ENCODE measurements at regions of chr9 and their contacts with region 1.

Region 1: DNA sequence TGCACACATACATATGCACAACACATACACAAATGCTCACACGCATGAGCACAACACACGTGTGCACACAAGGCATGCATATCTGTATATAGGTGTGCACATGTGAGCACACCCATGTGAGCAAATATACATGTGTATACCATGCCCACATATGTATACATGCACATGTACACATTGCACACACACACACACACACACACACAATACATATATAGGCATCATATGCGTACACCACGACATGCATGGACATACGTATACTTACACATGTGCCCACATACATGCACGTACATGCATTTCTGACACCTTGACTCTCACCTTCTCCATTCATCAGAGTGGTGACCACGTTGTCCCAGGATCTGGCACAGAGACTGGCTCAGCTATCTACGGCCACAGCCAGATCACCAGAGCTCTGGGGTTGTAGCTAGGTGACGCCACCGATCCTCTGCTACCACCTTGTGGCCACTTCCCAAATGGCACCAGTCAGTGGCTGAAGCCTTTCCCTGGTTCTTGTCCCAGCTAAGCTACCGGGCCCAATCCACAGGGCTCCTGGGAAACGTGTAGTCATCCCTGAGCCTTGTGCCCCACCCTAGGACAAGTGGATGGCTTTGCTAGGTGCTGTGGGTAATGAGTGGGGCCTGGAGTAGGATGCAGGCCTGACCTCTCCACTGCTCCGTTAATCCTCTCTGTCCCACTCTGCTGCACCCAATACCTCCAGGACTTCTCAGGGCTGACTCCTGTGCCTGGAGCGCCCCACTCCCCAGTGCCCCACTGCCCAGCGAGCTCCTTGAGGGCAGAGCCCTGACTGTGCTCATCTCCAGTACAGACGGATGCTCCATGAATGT is 194.4 kb downstream of the RGS3 start:
- DNase-seq: peak; percentile 87 to 90 (median 88)
- ATAC-seq: peak; percentile 54 to 83 (median 74)
- H3K4me3 ChIP-seq: no peak overlapping the region
- H3K27ac ChIP-seq: peak overlapping the region in 5 of 12 donors; percentile 9 to 56 (median 28)
- H3K4me1 ChIP-seq: peaks cover 8 to 44% (median 30%) of the 10 kb centered on the region in 12 donors
- H3K27me3 ChIP-seq: no peaks in the 10 kb centered on the region
- CTCF ChIP-seq: peak; percentile 93 to 98 (median 97)
- POLR2A ChIP-seq: no peak

Region 2: DNA sequence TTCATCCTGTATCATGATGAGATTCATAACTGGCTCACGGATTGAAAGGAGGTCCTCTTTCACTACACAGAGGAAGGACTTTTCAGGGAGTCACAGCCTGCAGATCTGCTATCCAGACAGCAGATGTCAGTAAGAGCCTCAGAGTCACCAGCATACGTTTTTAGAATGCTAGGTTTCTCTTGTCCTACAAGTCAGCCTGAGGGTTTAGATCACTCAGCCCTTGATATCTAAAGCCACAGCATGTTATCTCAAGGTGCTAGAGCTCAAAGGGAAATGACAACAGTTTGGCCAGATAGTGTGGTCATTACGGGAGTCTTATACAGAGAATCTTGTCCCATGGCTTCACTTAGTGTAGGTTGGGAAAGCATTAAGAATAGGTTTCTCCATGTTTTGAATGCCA is 736.4 kb before region 1 on chr9:
- intact Hi-C with region 1: loop called in 1 of 10 experiments (anchors 10 kb)
- DNase-seq: no peak
- ATAC-seq: peak in 3 of 4 donors; percentile 61 to 76 (median 62)
- H3K4me3 ChIP-seq: no peak overlapping the region
- H3K27ac ChIP-seq: no peak overlapping the region
- H3K4me1 ChIP-seq: no peaks in the 10 kb centered on the region
- H3K27me3 ChIP-seq: peaks cover 0 to 6% (median 0%) of the 10 kb centered on the region in 9 donors
- CTCF ChIP-seq: peak in 10 of 12 donors; percentile 16 to 65 (median 46)
- POLR2A ChIP-seq: no peak

Region 3: DNA sequence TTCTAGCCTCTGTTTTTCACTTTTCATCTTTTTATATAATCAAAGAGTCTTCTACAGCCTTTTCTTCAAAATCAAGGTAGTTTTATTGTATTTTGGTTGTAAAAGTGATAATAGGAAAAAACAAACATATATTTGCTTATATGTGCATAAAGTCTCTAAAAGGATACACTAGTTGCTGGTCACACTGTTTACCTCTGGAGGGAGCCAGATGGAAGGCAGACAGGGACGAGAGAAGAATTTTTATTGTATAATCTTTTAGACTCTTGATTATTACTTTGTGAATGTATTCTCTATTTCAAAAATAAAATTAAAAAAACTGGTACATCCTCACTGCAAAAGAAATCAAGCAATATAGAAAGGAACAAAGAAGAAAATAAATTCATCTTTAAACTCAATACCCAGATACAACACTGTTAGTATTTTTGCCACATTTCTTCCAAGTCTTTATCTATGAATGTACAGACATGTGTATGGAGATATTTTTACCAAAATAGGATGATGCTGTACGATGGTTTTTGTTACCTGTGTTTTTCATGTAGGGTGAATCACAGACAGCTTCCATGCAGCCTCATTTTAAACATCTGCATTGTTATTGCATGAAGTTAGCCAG is 348.6 kb before region 1 on chr9:
- intact Hi-C with region 1: loop called in 5 of 10 experiments (anchors 2 to 10 kb)
- DNase-seq: no peak
- ATAC-seq: peak in 2 of 4 donors; percentile 63 to 64
- H3K4me3 ChIP-seq: no peak overlapping the region
- H3K27ac ChIP-seq: peak overlapping the region in 3 of 12 donors; percentile 16 to 73 (median 71)
- H3K4me1 ChIP-seq: peaks cover 0 to 22% (median 9%) of the 10 kb centered on the region in 12 donors
- H3K27me3 ChIP-seq: no peaks in the 10 kb centered on the region
- CTCF ChIP-seq: peak; percentile 56 to 83 (median 65)
- POLR2A ChIP-seq: no peak

Region 4: DNA sequence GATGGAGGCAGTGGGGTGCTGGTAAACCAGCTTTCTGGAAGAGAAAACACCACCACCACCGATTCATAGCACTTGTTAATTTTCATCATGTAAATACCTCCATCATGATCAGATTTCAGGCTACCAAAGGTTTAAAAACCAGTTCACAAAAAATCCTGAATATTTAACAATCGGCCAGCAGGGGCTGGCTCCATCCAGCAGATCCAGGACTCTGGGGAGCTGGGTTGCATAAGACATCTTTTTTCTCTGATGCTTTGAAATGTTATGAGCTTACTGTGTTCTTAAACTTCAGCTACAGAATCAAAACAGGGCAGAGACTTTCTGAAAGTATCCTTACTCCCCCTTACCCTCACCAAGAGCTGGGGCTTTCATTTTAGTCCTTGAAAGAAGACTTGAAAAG is 340.1 kb before region 1 on chr9:
- intact Hi-C with region 1: loop called in 3 of 10 experiments (anchors 5 to 10 kb)
- DNase-seq: no peak
- ATAC-seq: no peak
- H3K4me3 ChIP-seq: no peak overlapping the region
- H3K27ac ChIP-seq: no peak overlapping the region
- H3K4me1 ChIP-seq: peaks cover 0 to 3% (median 0%) of the 10 kb centered on the region in 12 donors
- H3K27me3 ChIP-seq: no peaks in the 10 kb centered on the region
- CTCF ChIP-seq: peak in 3 of 12 donors; percentile 8 to 24 (median 13)
- POLR2A ChIP-seq: no peak

Region 5: GRCh38 chr9:113446323-113446740 is 211.6 kb before region 1 on chr9:
- intact Hi-C with region 1: loop called (anchors 1 to 2 kb)
- DNase-seq: no peak
- ATAC-seq: peak in 3 of 4 donors; percentile 42 to 70 (median 59)
- H3K4me3 ChIP-seq: no peak overlapping the region
- H3K27ac ChIP-seq: peak overlapping the region in 9 of 12 donors; percentile 6 to 67 (median 35)
- H3K4me1 ChIP-seq: peaks cover 0 to 19% (median 5%) of the 10 kb centered on the region in 12 donors
- H3K27me3 ChIP-seq: no peaks in the 10 kb centered on the region
- CTCF ChIP-seq: peak; percentile 53 to 82 (median 70)
- POLR2A ChIP-seq: no peak

Region 6: DNA sequence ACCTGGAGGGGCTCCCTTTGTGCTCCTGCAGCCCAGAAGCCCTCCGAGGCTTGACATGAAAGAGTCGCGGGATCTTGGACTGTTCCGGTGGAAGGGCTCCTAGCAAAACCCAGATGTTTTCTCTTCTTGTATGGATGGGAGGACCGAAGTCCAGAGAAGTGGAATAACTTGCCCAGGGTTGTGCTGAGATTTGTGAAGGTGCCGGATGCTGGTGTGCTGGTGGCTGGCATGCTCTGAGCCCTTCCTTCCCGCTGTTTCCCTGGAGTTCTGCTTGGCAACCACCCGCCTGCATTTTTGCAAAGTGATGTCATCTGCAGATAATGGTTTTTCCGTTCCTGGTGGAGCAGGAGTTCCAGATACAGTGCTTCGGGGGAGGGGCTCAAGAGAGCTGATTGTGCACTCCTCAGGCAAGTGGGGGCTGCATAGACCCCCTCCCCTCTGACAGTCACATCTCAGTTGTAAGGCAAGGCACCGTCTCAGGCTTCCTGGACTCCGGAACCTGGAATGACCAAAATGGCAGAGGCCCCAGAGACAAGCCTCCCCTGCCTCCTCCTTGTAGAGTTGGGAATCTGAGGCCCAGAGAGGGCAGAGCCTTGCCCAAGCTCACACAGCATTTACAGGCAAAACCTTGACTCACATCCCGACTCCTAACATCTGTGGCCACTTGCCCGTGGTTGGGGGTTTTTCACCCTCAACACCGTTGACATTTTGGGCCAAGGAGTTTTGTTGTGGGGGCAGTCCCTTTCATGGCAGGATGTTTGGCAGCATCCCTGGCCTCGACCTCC is 37.4 kb before region 1 on chr9:
- intact Hi-C with region 1: loop called in 2 of 10 experiments (anchors 2 kb)
- DNase-seq: peak in 4 of 5 donors; percentile 78 to 83 (median 82)
- ATAC-seq: peak; percentile 68 to 80 (median 72)
- H3K4me3 ChIP-seq: peak overlapping the region in 7 of 12 donors; percentile 4 to 19 (median 9)
- H3K27ac ChIP-seq: peak overlapping the region; percentile 60 to 95 (median 86)
- H3K4me1 ChIP-seq: peaks cover 4 to 87% (median 61%) of the 10 kb centered on the region in 12 donors
- H3K27me3 ChIP-seq: no peaks in the 10 kb centered on the region
- CTCF ChIP-seq: no peak
- POLR2A ChIP-seq: no peak